Endothelial cell of umbilical vein (primary cell): ENCODE measurements at regions of chr1 and their contacts with region 1.

Region 1: GRCh38 chr1:161314201-161314981 is at the start of gene SDHC:
- DNase-seq: peak; percentile 92
- H3K4me3 ChIP-seq: peak within 1 kb of the TSS; percentile 45 to 100 (median 80)
- H3K27ac ChIP-seq: peak within 1 kb of the TSS; percentile 93
- H3K4me1 ChIP-seq: peaks cover 9% of the 10 kb centered on the region
- H3K27me3 ChIP-seq: no peaks in the 10 kb centered on the region
- CTCF ChIP-seq: peak; percentile 39 to 64
- POLR2A ChIP-seq: peak; percentile 98
- total RNA-seq, gene SDHC: 136 and 148 TPM in 2 replicates

Region 2: GRCh38 chr1:161292631-161293030 is 21.8 kb before region 1 on chr1:
- CTCF ChIA-PET with region 1: interaction called, 16 read pairs
- POLR2A ChIA-PET with region 1: interaction called, 3 read pairs
- dilution Hi-C with region 1: no loop called
- intact Hi-C with region 1: no loop called
- DNase-seq: no peak
- H3K4me3 ChIP-seq: no peak overlapping the region
- H3K27ac ChIP-seq: no peak overlapping the region
- H3K4me1 ChIP-seq: no peaks in the 10 kb centered on the region
- H3K27me3 ChIP-seq: peaks cover 5 to 8% of the 10 kb centered on the region in 2 experiments
- CTCF ChIP-seq: no peak
- POLR2A ChIP-seq: no peak

Region 3: DNA sequence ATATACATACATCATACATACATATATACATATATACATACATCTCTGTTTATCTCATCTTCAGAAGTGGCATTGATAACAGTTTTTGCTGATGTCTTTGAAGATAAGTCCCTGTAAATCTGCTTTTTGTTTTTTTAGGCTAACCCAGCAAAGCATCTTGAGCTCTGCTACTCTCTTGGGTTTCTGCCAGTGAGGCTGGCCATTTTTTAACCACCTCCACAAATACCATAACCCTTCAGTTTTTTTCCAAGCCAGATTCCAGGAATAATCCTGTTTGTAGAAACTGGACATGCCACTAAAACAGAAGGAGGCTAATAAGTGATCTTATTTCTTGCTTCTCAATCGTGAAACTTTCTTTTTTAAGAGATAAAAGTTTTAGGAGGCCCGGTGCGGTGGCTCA is 21.4 kb after region 1 on chr1:
- CTCF ChIA-PET with region 1: interaction called, 3 read pairs
- POLR2A ChIA-PET with region 1: no interaction called
- dilution Hi-C with region 1: no loop called
- intact Hi-C with region 1: loop called (anchors 1 kb)
- DNase-seq: no peak
- H3K4me3 ChIP-seq: no peak overlapping the region
- H3K27ac ChIP-seq: no peak overlapping the region
- H3K4me1 ChIP-seq: no peaks in the 10 kb centered on the region
- H3K27me3 ChIP-seq: no peaks in the 10 kb centered on the region
- CTCF ChIP-seq: no peak
- POLR2A ChIP-seq: no peak

Region 4: DNA sequence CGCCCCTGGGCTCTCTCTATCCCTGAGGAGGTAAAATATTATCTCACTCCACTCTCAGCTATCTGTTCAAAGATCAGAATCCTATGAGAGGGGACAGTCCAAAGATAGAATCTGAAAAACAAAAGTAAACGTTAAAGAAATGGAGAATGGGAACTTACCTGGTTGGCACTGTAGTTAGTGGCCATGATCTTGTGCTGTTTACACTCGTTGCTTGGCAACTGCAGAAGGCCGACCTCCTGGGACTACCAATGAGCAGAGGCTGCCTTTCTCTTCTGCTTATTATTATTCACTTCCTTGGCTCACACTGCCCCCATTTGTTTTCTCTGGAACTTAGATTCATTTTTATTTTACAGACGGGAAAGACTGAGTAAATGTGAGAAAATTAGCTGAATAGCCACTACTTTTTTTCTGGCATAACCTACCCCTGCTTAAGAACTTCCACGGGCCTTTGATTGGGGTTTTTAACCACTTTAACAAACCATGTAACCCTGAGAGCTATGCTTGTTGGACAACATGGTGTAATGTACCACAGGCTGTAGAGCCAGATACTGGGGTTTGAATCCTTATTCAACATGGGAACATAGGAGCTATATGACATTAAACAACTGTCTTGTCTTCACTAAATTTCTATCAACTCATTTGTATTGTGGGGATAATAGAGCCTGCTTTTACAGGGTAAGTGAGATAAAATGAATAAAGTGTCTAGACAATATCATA is 53.5 kb after region 1 on chr1 and contains the start of gene CFAP126:
- CTCF ChIA-PET with region 1: no interaction called
- POLR2A ChIA-PET with region 1: no interaction called
- dilution Hi-C with region 1: no loop called
- intact Hi-C with region 1: loop called (anchors 5 kb)
- DNase-seq: peak; percentile 81
- H3K4me3 ChIP-seq: no peak within 1 kb of the TSS
- H3K27ac ChIP-seq: peak within 1 kb of the TSS; percentile 16
- H3K4me1 ChIP-seq: peaks cover 2% of the 10 kb centered on the region
- H3K27me3 ChIP-seq: no peaks in the 10 kb centered on the region
- CTCF ChIP-seq: peak; percentile 6 to 9
- POLR2A ChIP-seq: no peak
- total RNA-seq, gene CFAP126: not detected in 2 replicates